WTC11 (cell line): ENCODE measurements at regions of chr1 and their contacts with region 1.

Region 1: DNA sequence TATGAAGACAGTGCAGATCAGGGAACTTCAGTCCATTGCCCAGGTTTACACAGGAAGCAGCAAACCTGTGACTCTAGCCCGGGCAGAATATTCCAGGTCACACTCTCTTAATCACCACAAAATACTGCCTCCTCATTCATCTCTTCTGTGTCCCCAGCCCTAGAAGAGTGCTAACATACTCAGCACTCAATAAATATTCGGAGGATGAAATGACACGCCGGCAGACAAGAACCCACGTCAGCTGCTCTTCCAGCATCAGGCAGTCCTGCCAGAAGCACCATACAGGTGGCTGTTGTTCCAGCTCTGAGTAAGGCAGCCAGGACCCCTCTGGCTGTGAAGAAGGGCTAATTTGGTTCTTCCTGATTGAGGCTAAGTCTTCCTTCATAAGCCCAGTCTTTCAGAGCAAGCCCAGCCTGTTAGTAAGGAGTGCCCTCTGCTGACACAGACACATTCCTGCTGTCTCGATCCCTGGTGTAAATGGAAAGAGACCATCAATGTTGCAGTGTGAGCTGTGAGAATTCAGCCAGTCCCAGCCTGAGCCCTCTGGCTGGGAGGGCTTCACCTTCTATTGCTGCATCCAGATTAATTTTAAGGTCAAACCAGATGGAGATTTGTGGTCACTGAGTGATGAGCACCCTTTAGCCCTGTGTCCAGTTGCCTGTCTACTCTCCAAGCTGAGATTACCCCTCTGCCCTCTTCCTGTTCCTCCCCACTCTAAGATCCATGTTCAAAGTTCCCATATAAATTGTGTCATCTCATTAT is 45.0 kb upstream of the KIRREL1 start:
- DNase-seq: peak; percentile 59
- ATAC-seq: peak; percentile 99
- H3K4me3 Mint-ChIP-seq: no peak overlapping the region
- H3K27ac Mint-ChIP-seq: no peak overlapping the region
- H3K4me1 Mint-ChIP-seq: peaks cover 2% of the 10 kb centered on the region; the same call in 1 of the 2 replicates
- H3K27me3 Mint-ChIP-seq: peaks cover 2% of the 10 kb centered on the region
- CTCF ChIP-seq: 0 out of 2 replicates have a peak, but pooled peaks have one; percentile 16

Region 2: DNA sequence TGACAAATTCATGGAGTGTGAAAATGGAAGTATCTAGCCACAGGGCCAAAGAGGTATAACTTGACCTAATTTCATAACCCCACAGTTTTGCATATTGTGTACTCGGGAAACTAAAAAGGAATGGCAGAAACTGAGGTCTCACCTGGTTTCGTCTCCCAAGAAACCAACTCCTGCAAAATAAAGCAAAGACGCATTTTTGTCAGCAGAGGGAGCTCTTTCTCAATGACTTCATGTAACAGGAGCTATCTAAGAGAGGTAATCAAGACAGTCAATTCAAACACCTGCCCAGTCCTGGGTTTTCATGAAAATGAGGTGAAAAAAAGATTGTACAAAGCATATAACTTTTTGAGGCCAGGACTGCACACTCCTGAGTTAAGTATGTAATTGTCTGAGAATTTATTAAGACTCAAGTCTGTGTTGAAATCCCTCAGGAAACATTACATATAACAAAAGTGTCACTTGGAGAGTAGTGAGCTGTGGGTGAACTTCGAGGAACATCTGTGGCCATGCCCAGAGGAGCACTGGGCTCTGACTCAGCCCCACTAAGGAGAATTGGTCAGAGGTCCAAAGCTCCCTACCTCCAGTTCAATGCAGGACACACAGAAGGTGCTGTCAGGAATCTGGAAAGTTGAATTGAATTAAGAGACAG is 368.2 kb before region 1 on chr1:
- CTCF ChIA-PET with region 1: interaction called, 11 read pairs
- POLR2A ChIA-PET with region 1: no interaction called
- DNase-seq: peak; percentile 36
- ATAC-seq: peak; percentile 87
- H3K4me3 Mint-ChIP-seq: no peak overlapping the region
- H3K27ac Mint-ChIP-seq: peak overlapping the region; percentile 85; the same call in 1 of the 2 replicates
- H3K4me1 Mint-ChIP-seq: peaks cover 4% of the 10 kb centered on the region
- H3K27me3 Mint-ChIP-seq: no peaks in the 10 kb centered on the region
- CTCF ChIP-seq: peak; percentile 65

Region 3: GRCh38 chr1:157770442-157771043 is 177.9 kb before region 1 on chr1:
- CTCF ChIA-PET with region 1: interaction called, 10 read pairs
- POLR2A ChIA-PET with region 1: no interaction called
- DNase-seq: peak; percentile 53
- ATAC-seq: peak; percentile 60
- H3K4me3 Mint-ChIP-seq: no peak overlapping the region
- H3K27ac Mint-ChIP-seq: no peak overlapping the region
- H3K4me1 Mint-ChIP-seq: peaks cover 5% of the 10 kb centered on the region
- H3K27me3 Mint-ChIP-seq: no peaks in the 10 kb centered on the region
- CTCF ChIP-seq: peak; percentile 62

Region 4: GRCh38 chr1:157849229-157849875 is 99.1 kb before region 1 on chr1:
- CTCF ChIA-PET with region 1: no interaction called
- POLR2A ChIA-PET with region 1: no interaction called
- DNase-seq: no peak
- ATAC-seq: no peak
- H3K4me3 Mint-ChIP-seq: no peak overlapping the region
- H3K27ac Mint-ChIP-seq: no peak overlapping the region
- H3K4me1 Mint-ChIP-seq: no peaks in the 10 kb centered on the region
- H3K27me3 Mint-ChIP-seq: no peaks in the 10 kb centered on the region; the same call in 1 of the 2 replicates
- CTCF ChIP-seq: no peak

Region 5: DNA sequence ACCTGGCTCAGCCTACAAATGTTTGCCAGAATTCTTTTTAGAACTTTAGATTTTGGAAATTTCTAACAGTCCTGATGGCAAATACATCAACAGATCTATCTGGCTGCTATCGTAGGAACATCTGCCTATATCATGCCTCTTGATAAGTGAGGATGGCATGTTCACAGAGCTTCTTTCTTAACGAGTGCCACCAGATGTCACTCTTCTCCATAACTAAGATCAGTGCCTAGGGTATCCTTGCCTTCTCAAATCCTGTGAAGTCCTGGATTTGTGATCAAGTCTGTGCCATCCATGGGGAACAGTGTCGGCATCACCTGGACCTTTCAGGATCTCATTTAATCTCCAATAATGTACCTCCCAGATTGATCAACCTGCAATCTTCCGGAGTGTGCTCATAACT is 70.4 kb before region 1 on chr1:
- CTCF ChIA-PET with region 1: interaction called, 22 read pairs
- POLR2A ChIA-PET with region 1: no interaction called
- DNase-seq: no peak
- ATAC-seq: peak; percentile 92
- H3K4me3 Mint-ChIP-seq: no peak overlapping the region
- H3K27ac Mint-ChIP-seq: no peak overlapping the region
- H3K4me1 Mint-ChIP-seq: no peaks in the 10 kb centered on the region
- H3K27me3 Mint-ChIP-seq: no peaks in the 10 kb centered on the region; the same call in 1 of the 2 replicates
- CTCF ChIP-seq: peak; percentile 28; the same call in 1 of the 2 replicates

Region 6: DNA sequence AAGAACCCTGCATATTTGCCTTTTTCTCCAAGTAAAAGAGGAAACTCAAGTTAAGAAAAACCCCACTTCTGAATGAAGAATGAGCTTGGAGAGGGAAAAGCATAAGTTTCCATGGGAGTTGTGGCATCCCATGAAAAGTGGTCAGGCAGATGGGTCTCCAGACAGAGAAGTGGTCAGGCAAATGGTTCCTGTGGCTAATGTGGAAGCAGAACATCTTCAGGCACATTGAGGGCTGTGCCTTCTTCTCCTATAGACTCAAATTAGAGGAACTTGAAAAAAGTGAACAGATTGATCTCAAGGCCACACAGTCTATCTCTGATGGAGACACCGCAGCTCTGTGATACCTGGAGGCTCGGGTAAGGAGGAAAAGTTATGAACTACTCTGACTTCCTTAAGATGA is 10.7 kb before region 1 on chr1:
- CTCF ChIA-PET with region 1: interaction called, 11 read pairs
- POLR2A ChIA-PET with region 1: no interaction called
- DNase-seq: no peak
- ATAC-seq: no peak
- H3K4me3 Mint-ChIP-seq: no peak overlapping the region
- H3K27ac Mint-ChIP-seq: no peak overlapping the region
- H3K4me1 Mint-ChIP-seq: no peaks in the 10 kb centered on the region
- H3K27me3 Mint-ChIP-seq: peaks cover 6% of the 10 kb centered on the region
- CTCF ChIP-seq: no peak

Region 7: DNA sequence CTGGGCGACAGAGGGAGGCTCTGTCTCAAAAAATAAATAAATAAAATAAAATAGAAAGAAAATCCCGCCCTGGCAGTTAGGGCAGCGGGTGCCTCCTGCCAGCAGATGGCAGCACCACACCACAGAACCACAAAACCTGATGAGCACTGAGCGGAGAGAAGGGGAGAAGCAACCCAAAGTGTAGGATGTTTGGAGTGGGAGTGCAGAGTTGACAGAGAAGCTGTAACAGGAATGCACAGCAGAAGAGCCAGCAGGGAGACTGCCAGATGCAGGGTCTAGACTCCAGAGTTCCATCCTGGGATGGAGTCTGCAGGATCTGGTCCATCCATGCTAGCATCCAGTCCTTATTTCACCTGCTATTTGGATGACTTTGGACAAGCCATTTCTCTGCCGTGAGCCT is 15.2 kb after region 1 on chr1:
- CTCF ChIA-PET with region 1: interaction called, 29 read pairs
- POLR2A ChIA-PET with region 1: no interaction called
- DNase-seq: peak; percentile 79
- ATAC-seq: peak; percentile 90
- H3K4me3 Mint-ChIP-seq: no peak overlapping the region
- H3K27ac Mint-ChIP-seq: no peak overlapping the region
- H3K4me1 Mint-ChIP-seq: peaks cover 14% of the 10 kb centered on the region
- H3K27me3 Mint-ChIP-seq: peaks cover 3% of the 10 kb centered on the region; the same call in 1 of the 2 replicates
- CTCF ChIP-seq: peak; percentile 89

Region 8: GRCh38 chr1:158101927-158102326 is 153.4 kb after region 1 on chr1:
- CTCF ChIA-PET with region 1: interaction called, 10 read pairs
- POLR2A ChIA-PET with region 1: no interaction called
- DNase-seq: no peak
- ATAC-seq: no peak
- H3K4me3 Mint-ChIP-seq: no peak overlapping the region
- H3K27ac Mint-ChIP-seq: peak overlapping the region; percentile 96
- H3K4me1 Mint-ChIP-seq: peaks cover 94% of the 10 kb centered on the region
- H3K27me3 Mint-ChIP-seq: no peaks in the 10 kb centered on the region
- CTCF ChIP-seq: no peak